ENCODE measurements at regions of chrX and their contacts with region 1.

Region 1: DNA sequence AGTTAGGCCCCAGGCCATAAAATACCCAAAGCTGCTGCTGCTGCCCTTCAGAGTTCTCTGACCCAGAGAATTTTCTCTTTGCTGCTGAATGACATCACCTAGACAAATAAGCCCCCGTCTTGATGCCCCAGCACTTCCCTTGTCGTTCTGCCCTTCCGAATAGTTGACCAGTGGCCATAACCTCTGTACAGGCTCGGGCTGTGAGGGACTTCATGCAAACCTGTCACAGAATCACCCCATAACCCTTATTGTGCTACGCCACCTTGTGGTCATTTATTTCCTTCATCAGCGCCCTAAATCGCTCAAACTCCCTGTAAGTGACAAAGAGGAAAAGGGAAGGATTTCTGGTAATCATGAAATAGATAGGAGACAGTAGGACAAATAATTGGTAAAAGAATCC is 18.8 kb downstream of the SPACA5 start:
- DNase-seq: peak; percentile 34
- CTCF ChIP-seq: peak; percentile 57

Region 2: GRCh38 chrX:47690175-47690574 is 335.4 kb before region 1 on chrX:
- CTCF ChIA-PET with region 1: no interaction called
- POLR2A ChIA-PET with region 1: no interaction called
- DNase-seq: no peak
- CTCF ChIP-seq: no peak

Region 3: GRCh38 chrX:47836164-47837072 is 189.1 kb before region 1 on chrX and contains the start of gene ZNF81:
- CTCF ChIA-PET with region 1: interaction called, 48 read pairs
- POLR2A ChIA-PET with region 1: no interaction called
- DNase-seq: peak; percentile 83
- CTCF ChIP-seq: no peak

Region 4: GRCh38 chrX:47900833-47901232 is 124.7 kb before region 1 on chrX:
- CTCF ChIA-PET with region 1: no interaction called
- POLR2A ChIA-PET with region 1: no interaction called
- DNase-seq: peak; percentile 5
- CTCF ChIP-seq: no peak

Region 5: DNA sequence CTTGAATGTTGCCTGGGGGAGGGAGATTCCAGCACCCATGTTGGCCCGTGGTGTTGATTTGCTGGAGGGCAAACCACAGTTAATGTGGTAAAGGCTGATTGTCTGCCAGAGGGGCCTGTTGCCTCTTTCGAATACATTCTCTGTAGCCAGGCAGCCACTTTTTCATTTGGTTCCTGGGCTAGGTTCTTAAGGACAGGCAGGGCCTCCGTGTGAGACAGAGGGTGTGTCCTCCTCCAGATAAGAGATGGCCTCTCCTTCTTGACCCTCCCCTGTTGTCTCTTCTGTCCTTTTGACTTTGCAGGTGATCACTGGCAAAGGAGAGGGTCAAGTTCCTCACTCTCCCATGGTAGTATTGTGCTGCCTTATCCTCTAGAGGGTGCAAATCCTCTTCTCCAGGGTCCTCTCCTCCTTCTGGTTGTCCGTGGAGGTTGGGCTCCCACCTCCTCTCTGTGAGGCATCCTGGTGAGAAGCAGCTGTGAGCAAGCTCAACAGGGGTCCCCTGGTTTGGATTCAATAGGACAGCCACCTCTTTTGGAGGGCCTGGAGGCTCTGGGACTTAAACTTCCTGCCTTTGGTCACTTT is 66.7 kb before region 1 on chrX:
- CTCF ChIA-PET with region 1: interaction called, 12 read pairs
- POLR2A ChIA-PET with region 1: no interaction called
- DNase-seq: peak; percentile 13
- CTCF ChIP-seq: peak; percentile 12

Measured in GM10248 (cell line).